Adrenal gland (tissue), 19 donors: ENCODE measurements at regions of chr15 and their contacts with region 1.

Region 1: DNA sequence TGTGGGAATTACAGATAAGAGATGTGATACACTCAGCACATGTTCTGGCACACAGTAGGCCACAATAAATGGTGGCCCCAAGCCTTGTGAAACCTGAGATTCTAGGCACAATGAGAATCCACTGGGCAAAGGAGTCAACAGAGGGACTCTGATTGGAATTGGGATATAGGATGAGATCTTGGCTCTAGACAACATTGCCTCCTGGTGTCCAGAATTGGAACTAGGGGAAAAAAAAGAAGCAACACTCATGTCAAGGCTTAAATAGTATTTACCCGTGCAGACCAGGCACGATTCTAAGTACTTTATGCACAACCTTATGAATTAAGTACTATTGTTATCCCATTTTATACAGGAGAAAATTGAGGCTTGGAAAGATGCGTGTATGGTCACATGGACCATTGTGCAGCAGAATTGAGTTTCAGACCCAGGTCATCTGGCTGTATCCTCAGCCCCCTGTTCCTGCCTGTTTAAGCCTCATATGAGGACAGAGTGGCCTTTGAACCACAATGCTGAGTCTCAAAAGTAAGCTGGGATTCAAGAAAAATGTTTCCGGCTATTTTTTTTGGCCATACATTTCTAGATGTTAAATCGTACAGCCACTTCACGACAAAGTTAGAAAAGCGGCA is 124.8 kb downstream of the SV2B start:
- DNase-seq: peak in 3 of 7 donors; percentile 23 to 36 (median 24)
- H3K4me3 ChIP-seq: no peak overlapping the region
- H3K27ac ChIP-seq: no peak overlapping the region
- H3K4me1 ChIP-seq: no peaks in the 10 kb centered on the region
- H3K27me3 ChIP-seq: peaks cover 12% of the 10 kb centered on the region
- CTCF ChIP-seq: peak; percentile 54 to 76 (median 70)
- POLR2A ChIP-seq: no peak

Region 2: DNA sequence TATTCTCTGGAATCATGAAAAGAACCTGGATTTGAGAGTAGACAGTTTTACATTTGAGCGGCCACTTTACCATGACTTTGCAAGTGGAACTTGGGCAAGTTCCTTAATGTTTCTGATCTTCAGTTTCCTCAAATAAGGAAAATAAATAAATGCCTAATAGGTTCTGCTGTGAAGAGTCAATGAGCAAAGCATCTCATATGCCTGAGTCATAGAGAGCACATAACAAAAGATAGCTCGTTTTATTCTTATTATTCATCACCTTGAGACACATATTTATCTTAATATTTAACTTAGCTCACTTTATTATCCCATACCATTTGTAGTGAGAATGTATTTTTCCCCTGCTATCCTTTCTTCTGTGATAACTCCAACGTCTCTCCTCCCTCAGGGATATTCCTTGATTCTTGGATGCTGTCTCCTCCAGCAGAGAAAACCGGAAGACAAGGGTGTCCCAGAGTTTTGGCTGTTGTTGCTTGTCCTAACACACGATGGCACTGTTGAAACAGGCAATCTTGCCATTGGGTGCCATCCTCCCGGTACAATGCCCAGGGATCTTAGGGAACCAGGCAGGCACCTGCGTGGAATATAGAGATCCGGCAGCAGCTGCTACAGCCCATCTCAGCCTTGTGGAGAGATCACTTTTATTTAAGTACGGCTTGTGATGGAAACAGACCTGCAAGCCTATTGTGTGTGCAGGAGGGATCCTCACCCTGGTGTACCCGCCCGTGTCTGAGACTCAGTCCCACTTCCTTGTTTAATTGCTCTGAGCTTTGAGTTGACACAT is 169.1 kb before region 1 on chr15:
- intact Hi-C with region 1: loop called in 1 of 2 experiments (anchors 5 kb)
- DNase-seq: peak; percentile 69 to 87 (median 78)
- H3K4me3 ChIP-seq: no peak overlapping the region
- H3K27ac ChIP-seq: no peak overlapping the region
- H3K4me1 ChIP-seq: no peaks in the 10 kb centered on the region
- H3K27me3 ChIP-seq: peaks cover 20% of the 10 kb centered on the region
- CTCF ChIP-seq: peak; percentile 62 to 87 (median 80)
- POLR2A ChIP-seq: no peak

Region 3: DNA sequence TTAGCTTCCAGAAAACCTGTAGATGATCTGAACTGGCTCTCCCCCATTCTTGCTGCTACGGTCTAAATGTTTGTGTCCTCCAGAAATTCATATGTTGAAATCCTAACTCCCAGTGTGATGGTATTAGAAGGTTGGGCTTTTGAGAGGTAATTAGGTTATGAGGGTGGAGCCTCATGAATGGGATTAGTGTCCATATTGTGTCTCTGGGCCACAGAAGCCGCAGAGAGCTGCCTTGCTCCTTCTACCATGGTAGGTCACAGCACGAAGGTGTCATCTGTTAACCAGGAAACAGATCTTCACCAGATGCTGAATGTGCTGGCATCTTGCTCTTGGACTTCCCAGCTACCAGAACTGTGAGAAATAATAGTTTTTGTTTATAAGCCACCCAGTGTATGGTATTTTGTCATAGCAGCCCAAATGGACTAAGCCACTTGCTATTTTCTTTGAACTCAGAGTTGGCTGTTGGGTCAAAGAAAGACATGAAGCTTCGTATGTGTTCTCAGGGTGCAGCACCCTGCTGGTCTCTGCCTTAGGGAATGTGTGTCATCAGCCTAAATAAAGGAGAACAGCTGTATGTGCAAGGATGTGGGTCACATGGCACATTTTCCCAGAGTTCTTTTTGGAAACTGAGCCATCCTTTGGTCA is 311.1 kb after region 1 on chr15:
- intact Hi-C with region 1: no loop called
- DNase-seq: no peak
- H3K4me3 ChIP-seq: no peak overlapping the region
- H3K27ac ChIP-seq: no peak overlapping the region
- H3K4me1 ChIP-seq: no peaks in the 10 kb centered on the region
- H3K27me3 ChIP-seq: no peaks in the 10 kb centered on the region
- CTCF ChIP-seq: no peak
- POLR2A ChIP-seq: no peak

Region 4: DNA sequence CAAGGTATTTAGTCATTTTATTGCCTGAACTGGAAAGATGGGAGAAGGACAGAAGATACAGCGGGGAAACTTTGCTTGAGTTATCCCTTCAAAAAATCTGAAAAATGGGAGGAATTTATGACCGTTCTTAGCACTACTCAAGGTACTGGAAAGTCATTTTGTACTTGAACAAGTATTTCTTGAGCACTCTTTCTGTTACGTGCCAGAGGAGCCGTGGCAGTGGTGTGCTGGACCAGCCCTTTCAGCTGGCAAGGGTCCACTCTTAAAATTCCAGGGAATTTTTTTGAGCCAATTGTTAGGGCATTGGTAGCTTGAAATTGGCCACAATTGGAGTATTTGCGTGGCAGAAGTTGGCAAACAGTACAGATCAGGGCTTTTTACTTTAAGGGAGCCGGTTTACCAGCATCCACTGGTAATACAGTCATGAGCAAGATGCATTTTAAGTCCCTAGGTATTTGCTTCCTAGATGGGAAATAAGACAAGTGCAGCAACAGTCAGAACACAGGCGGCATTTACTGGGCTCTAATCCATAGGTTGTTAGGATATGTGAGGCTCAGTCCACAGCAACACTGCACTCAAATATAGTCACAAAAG is 1022.9 kb after region 1 on chr15:
- intact Hi-C with region 1: no loop called
- DNase-seq: no peak
- H3K4me3 ChIP-seq: no peak overlapping the region
- H3K27ac ChIP-seq: no peak overlapping the region
- H3K4me1 ChIP-seq: no peaks in the 10 kb centered on the region
- H3K27me3 ChIP-seq: no peaks in the 10 kb centered on the region
- CTCF ChIP-seq: no peak
- POLR2A ChIP-seq: no peak